ENCODE measurements at regions of chr6 and their contacts with region 1.

Region 1: DNA sequence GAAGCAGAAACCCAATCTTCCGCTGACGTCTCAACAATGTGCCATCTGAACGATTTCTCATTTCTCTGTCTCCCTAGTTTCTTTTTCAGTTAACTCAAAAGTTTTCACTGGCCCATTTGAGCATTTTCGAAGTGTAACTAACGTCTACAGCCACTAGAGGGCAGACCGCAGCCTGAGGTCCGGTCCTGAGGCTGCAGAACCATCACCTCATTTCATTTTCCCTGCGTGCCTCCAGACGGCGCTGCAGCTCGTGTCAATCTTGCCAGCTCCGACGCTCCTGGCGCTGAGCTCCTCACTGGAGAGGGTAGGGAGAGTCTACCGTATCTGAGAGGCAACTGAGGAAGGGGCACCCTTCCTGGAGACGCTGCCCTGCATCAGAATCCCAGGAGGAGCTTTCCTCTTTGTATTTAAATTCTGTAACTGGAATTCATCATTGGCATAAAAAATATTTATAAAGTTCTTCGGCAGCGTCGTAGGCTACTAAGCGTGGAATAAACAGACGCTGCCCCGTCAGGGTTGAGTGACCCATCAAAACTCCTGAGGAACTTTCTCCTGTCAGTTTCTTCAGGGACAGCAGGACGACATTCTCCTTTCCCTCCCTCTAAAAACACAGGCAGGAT is 28.5 kb upstream of the DTNBP1 start:
- DNase-seq: peak; percentile 94
- H3K4me3 ChIP-seq: peak overlapping the region; percentile 29 to 47 (median 39)
- H3K27ac ChIP-seq: peak overlapping the region in 1 of 4 donors; percentile 48
- H3K4me1 ChIP-seq: peaks cover 11 to 18% (median 16%) of the 10 kb centered on the region in 4 donors
- H3K27me3 ChIP-seq: no peaks in the 10 kb centered on the region
- CTCF ChIP-seq: peak; percentile 98 to 100 (median 99)
- EP300 ChIP-seq: no peak
- POLR2A ChIP-seq: no peak

Region 2: GRCh38 chr6:16078064-16078463 is 386.7 kb after region 1 on chr6:
- intact Hi-C with region 1: no loop called
- DNase-seq: no peak
- H3K4me3 ChIP-seq: no peak overlapping the region
- H3K27ac ChIP-seq: no peak overlapping the region
- H3K4me1 ChIP-seq: no peaks in the 10 kb centered on the region
- H3K27me3 ChIP-seq: peaks cover 0 to 2% (median 0%) of the 10 kb centered on the region in 4 donors
- CTCF ChIP-seq: no peak
- EP300 ChIP-seq: no peak
- POLR2A ChIP-seq: no peak

Region 3: GRCh38 chr6:16184129-16184528 is 492.8 kb after region 1 on chr6:
- intact Hi-C with region 1: loop called (anchors 1 kb)
- DNase-seq: no peak
- H3K4me3 ChIP-seq: no peak overlapping the region
- H3K27ac ChIP-seq: no peak overlapping the region
- H3K4me1 ChIP-seq: peaks cover 0 to 21% (median 13%) of the 10 kb centered on the region in 4 donors
- H3K27me3 ChIP-seq: peaks cover 0 to 6% (median 0%) of the 10 kb centered on the region in 4 donors
- CTCF ChIP-seq: peak in 1 of 3 experiments; percentile 37
- EP300 ChIP-seq: no peak
- POLR2A ChIP-seq: no peak

Region 4: DNA sequence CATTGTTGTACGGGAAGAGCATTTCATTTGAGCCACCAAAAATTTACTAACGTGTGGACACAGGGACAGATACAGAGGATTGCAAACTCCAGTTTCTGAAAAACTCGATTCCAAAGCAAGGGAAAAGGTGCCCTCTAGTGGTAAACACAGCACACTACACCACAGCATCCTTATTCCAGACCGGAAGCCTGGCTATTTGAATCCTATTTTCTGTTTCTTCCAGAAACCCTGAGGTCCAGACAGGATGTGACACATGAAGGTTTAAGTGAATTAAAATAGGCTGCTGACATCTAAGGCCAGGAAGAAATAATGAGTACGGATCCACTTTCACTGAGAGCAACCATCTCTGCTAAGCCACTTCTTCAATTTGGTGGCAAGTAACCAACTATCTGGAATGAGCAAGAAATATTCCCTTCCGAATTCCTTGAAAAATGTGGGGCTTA is 515.3 kb after region 1 on chr6:
- intact Hi-C with region 1: loop called (anchors 1 kb)
- DNase-seq: no peak
- H3K4me3 ChIP-seq: peak overlapping the region in 1 of 4 donors; percentile 10
- H3K27ac ChIP-seq: no peak overlapping the region
- H3K4me1 ChIP-seq: peaks cover 5 to 7% (median 6%) of the 10 kb centered on the region in 4 donors
- H3K27me3 ChIP-seq: peaks cover 0 to 21% (median 0%) of the 10 kb centered on the region in 4 donors
- CTCF ChIP-seq: peak; percentile 97 to 99 (median 97)
- EP300 ChIP-seq: no peak
- POLR2A ChIP-seq: no peak

Measured in esophagus muscularis mucosa (tissue), 4 donors.